Right lobe of liver (tissue), 6 donors: ENCODE measurements at regions of chr10 and their contacts with region 1.

Region 1: DNA sequence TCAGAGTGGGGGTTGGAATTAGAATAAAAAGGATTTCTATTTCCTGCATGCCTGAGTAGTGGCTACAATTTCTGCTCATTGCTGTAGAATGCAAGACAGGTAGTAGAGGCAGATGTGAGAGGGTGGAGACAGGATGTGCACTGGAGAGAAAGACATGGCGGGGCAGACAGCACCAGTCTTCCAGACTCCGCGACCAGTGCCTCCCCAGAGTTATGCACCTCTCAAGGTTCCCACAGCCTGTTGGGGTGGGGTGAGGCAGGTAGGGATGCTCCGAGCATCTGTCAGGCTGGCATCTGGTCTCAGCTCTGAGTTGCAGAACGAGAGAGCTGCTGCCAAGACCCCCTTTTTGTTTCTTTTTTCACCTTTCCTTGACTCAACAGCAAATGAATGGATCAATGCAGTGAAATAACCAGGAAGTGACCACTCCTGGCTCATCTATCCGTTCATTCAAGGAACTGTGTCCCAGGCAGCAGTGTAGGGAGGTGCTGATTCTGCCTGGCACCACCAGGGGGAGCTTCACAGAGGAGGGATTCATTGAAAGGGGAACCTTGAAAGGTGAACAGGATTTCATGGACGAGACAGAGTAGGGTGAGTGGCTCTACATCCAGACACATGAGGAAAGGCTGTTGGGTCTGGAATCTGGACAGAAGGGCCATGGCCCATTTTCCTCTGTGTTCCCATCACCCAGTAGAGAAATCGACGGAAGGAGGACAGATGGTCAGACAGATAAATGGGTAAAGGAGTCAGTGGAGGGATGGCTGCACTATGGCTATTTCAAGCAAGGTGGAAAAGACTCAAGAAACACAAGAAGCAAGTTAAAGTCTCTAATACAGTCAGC is 17.2 kb upstream of the SLC18A3 start:
- DNase-seq: peak in 2 of 3 donors; percentile 68 to 71
- ATAC-seq: peak; percentile 88 to 95 (median 90)
- H3K4me3 ChIP-seq: no peak overlapping the region
- H3K27ac ChIP-seq: no peak overlapping the region
- H3K4me1 ChIP-seq: no peaks in the 10 kb centered on the region
- H3K27me3 ChIP-seq: no peaks in the 10 kb centered on the region
- CTCF ChIP-seq: peak; percentile 72 to 95 (median 95)
- POLR2A ChIP-seq: no peak

Region 2: GRCh38 chr10:48649349-48649944 is 943.5 kb before region 1 on chr10:
- intact Hi-C with region 1: no loop called
- DNase-seq: no peak
- ATAC-seq: no peak
- H3K4me3 ChIP-seq: no peak overlapping the region
- H3K27ac ChIP-seq: no peak overlapping the region
- H3K4me1 ChIP-seq: no peaks in the 10 kb centered on the region
- H3K27me3 ChIP-seq: no peaks in the 10 kb centered on the region
- CTCF ChIP-seq: no peak
- POLR2A ChIP-seq: no peak

Region 3: DNA sequence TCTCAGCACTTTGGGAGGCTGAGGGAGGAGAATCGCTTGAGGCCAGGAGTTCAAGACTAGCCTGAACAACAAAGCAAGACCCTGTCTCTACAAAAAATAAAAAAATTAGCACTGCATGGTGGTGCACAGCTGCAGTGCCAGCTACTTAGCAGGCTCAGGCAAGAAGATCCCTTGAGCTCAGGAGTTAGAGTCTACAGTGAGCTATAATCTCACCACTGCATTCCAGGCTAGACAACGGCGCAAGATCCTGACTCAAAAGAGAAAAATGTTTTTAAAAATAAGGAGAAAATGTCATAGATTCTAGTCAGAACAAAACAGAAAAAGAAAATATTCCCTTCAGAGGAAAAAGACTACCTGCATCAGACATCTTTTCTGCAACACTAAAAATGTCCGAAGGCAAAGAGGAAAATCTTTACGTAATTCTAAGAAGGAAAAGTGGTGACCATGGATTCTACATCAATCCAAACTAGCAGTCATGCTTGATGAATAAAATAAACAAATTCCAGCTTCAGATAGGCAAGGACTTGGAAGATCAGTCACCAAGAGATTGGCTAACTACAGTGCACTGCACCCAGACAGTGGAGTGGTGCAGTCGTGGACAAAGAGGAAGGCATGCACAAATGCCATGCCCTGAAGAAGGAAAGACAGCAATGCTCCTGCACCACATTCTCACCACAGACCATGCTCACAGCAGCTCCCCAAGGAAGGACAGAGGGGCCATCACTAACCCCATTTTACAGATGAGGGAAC is 108.3 kb before region 1 on chr10:
- intact Hi-C with region 1: no loop called
- DNase-seq: no peak
- ATAC-seq: no peak
- H3K4me3 ChIP-seq: no peak overlapping the region
- H3K27ac ChIP-seq: no peak overlapping the region
- H3K4me1 ChIP-seq: peaks cover 0 to 5% (median 3%) of the 10 kb centered on the region in 4 donors
- H3K27me3 ChIP-seq: no peaks in the 10 kb centered on the region
- CTCF ChIP-seq: no peak
- POLR2A ChIP-seq: no peak

Region 4: GRCh38 chr10:49783645-49784044 is 190.7 kb after region 1 on chr10:
- intact Hi-C with region 1: loop called (anchors 10 kb)
- DNase-seq: peak in 1 of 3 donors; percentile 27
- ATAC-seq: peak; percentile 37 to 82 (median 64)
- H3K4me3 ChIP-seq: no peak overlapping the region
- H3K27ac ChIP-seq: no peak overlapping the region
- H3K4me1 ChIP-seq: no peaks in the 10 kb centered on the region
- H3K27me3 ChIP-seq: no peaks in the 10 kb centered on the region
- CTCF ChIP-seq: peak; percentile 14 to 45 (median 31)
- POLR2A ChIP-seq: no peak